ENCODE measurements at regions of chr9 and their contacts with region 1.

Region 1: DNA sequence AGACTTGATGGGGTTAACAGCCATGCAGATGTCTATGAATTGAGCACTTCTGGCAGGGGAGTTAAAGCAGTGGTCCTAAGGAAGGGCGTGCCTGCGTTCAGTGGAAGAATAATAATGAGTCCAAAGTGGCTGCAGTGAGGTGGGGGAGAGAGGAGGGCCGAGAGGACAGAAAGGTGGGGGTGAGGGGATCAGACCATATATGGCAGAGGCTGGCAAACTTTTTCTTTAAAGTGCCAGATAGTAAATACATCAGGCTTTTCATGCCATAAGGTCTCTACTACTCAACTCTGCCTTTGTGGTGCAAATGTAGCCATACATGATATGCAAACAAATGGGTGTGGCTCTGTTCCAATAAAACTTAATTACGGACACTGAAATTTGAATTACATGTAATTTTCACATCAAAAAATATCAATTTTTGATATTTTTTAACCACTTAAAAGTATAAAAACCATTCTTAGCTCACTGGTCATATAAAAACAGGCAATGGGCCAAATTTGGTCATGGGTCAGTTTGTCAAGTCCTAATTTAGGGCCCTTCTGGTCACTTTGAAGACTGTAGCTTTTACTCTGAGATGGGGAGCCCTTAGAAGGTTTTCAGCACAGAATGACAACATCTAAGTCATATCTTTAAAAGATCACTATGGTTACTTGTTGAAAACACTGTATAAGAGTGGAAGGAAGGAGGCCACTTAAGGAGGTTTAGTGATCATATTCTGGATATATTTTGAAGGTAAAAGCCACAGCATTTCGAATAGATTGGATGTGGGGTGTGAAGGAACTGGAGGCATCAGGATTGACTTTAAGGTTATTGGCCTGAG is 76.9 kb downstream of the STRBP start:
- DNase-seq: no peak
- ATAC-seq: no peak
- H3K4me3 ChIP-seq: no peak overlapping the region
- H3K4me3 Mint-ChIP-seq: no peak overlapping the region
- H3K27ac ChIP-seq: peak overlapping the region; percentile 2 to 35
- H3K27ac Mint-ChIP-seq: no peak overlapping the region
- H3K4me1 ChIP-seq: peaks cover 40 to 49% of the 10 kb centered on the region in 2 donors
- H3K4me1 Mint-ChIP-seq: peaks cover 16% of the 10 kb centered on the region
- H3K27me3 ChIP-seq: no peaks in the 10 kb centered on the region
- H3K27me3 Mint-ChIP-seq: no peaks in the 10 kb centered on the region
- CTCF ChIP-seq: no peak

Region 2: DNA sequence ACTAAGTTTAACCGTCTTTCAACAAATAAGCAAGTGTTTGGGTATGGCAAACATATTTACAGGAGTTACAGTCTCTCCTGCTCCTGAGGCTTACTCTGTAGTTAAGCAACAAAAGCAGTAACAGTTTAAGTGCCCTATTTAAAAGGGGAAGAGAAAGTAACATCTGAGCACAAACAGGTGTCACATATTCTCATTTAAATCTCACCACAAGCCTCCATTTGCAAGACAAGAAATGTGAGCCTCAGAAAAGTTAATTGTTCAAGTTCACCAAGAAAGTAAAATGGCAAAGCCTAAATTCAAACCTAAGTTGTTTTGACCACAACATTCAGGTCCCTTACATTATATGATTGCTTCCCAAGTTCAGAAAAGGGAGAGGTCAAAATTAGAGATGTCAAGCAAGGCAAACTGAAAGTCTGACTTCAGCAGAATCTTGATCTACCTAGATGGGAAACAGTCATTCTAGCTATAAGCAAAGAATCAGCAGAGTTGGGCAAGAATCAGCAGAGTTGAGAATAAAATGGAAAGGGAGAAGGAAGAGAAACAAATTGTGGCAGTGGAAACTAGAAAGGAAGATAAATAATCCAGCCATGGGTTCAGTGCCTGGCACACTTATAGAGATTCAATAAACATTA is 16.5 kb before region 1 on chr9:
- CTCF ChIA-PET with region 1: interaction called, 3 read pairs
- POLR2A ChIA-PET with region 1: interaction called, 3 read pairs
- intact Hi-C with region 1: loop called (anchors 2 kb)
- DNase-seq: peak; percentile 83
- ATAC-seq: peak; percentile 91
- H3K4me3 ChIP-seq: peak overlapping the region in 1 of 5 experiments; percentile 53
- H3K4me3 Mint-ChIP-seq: peak overlapping the region; percentile 76
- H3K27ac ChIP-seq: peak overlapping the region; percentile 85 to 96
- H3K27ac Mint-ChIP-seq: peak overlapping the region; percentile 93
- H3K4me1 ChIP-seq: peaks cover 50 to 54% of the 10 kb centered on the region in 2 donors
- H3K4me1 Mint-ChIP-seq: peaks cover 74% of the 10 kb centered on the region
- H3K27me3 ChIP-seq: no peaks in the 10 kb centered on the region
- H3K27me3 Mint-ChIP-seq: no peaks in the 10 kb centered on the region
- CTCF ChIP-seq: no peak